ENCODE measurements at regions of chr6 and their contacts with region 1.

Region 1: GRCh38 chr6:42901536-42901957 is 14.3 kb upstream of the PTCRA start:
- DNase-seq: peak; percentile 85
- H3K4me3 ChIP-seq: no peak overlapping the region
- H3K27ac ChIP-seq: no peak overlapping the region
- H3K4me1 ChIP-seq: peaks cover 7% of the 10 kb centered on the region
- H3K27me3 ChIP-seq: no peaks in the 10 kb centered on the region
- CTCF ChIP-seq: peak; percentile 64 to 79
- POLR2A ChIP-seq: no peak

Region 2: DNA sequence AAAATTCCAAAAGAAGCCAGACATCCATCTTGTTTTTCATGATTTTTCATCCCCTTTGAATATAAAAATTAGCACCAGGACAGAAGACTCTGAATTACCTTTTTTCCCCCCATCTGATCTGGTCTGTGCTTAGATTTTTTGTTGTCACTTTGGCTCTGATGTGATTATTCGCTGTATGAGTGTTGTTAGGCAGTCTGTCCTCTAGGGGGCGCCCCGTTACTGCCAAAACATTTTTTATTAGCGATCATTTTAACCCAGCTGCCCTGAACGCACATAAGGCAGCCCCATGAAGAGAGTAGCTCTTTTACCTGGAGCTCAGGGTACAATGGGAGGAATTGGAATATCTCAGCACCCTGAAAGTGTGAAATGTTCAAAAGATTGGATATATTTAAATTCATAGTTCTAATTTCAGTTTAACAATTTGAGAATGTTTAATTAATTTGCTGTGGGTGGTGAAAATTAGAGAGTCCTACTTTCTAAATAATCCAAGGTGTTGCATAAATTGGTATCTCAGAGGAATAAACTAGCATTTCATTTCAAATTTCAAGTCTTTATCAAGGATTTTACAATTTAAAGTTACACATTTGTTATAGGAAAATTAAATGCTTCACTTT is 239.9 kb before region 1 on chr6:
- CTCF ChIA-PET with region 1: interaction called, 22 read pairs
- POLR2A ChIA-PET with region 1: no interaction called
- dilution Hi-C with region 1: no loop called
- intact Hi-C with region 1: loop called (anchors 1 kb)
- DNase-seq: peak; percentile 73
- H3K4me3 ChIP-seq: no peak overlapping the region
- H3K27ac ChIP-seq: no peak overlapping the region
- H3K4me1 ChIP-seq: no peaks in the 10 kb centered on the region
- H3K27me3 ChIP-seq: no peaks in the 10 kb centered on the region
- CTCF ChIP-seq: peak; percentile 71 to 75
- POLR2A ChIP-seq: no peak

Region 3: GRCh38 chr6:42879372-42880239 is 21.9 kb before region 1 on chr6 and contains the start of gene RPL7L1:
- CTCF ChIA-PET with region 1: interaction called, 3 read pairs
- POLR2A ChIA-PET with region 1: no interaction called
- dilution Hi-C with region 1: no loop called
- intact Hi-C with region 1: loop called (anchors 2 kb)
- DNase-seq: peak; percentile 90
- H3K4me3 ChIP-seq: peak within 1 kb of the TSS; percentile 77 to 91 (median 86)
- H3K27ac ChIP-seq: peak within 1 kb of the TSS; percentile 68
- H3K4me1 ChIP-seq: peaks cover 6% of the 10 kb centered on the region
- H3K27me3 ChIP-seq: no peaks in the 10 kb centered on the region
- CTCF ChIP-seq: no peak
- POLR2A ChIP-seq: peak; percentile 91
- total RNA-seq, gene RPL7L1: 94.4 and 103 TPM in 2 replicates

Region 4: DNA sequence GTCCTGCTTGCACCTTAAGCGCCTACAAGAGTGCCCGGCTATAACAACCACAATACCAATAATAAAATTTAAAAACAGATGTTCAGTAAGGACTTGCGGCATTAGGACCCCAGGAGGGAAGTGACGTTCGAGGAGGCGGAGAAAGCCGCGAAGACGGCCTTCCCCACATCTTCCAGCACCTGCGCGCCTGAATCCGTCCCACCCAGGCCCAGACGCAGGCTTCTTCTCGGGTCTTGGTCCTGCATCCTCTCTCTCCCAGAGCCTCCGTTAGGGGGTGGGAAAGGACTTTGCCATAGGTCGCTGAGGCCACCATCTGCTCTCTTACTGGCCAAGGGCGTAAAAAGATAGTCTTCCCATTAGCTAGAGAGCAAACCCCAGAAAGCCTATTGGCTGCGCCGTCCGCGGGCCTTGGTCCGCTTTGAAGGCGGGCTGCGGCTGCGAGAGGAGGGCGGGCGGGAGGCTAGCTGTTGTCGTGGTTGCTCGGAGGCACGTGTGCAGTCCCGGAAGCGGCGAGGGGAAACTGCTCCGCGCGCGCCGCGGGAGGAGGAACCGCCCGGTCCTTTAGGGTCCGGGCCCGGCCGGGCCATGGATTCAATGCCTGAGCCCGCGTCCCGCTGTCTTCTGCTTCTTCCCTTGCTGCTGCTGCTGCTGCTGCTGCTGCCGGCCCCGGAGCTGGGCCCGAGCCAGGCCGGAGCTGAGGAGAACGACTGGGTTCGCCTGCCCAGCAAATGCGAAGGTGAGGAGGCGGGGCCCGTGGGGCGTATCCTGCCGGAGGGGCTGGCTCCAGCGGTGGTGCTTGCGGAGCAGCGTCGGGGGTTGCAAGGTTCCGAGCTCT is 27.7 kb after region 1 on chr6 and contains the start of gene CNPY3:
- CTCF ChIA-PET with region 1: interaction called, 12 read pairs
- POLR2A ChIA-PET with region 1: no interaction called
- dilution Hi-C with region 1: no loop called
- intact Hi-C with region 1: no loop called
- DNase-seq: peak; percentile 98
- H3K4me3 ChIP-seq: peak within 1 kb of the TSS; percentile 54 to 94 (median 85)
- H3K27ac ChIP-seq: peak within 1 kb of the TSS; percentile 95
- H3K4me1 ChIP-seq: peaks cover 17% of the 10 kb centered on the region
- H3K27me3 ChIP-seq: peaks cover 0 to 3% of the 10 kb centered on the region in 2 experiments
- CTCF ChIP-seq: peak in 1 of 2 donors; percentile 7
- POLR2A ChIP-seq: no peak
- total RNA-seq, gene CNPY3: 43.3 and 53.1 TPM in 2 replicates

Region 5: DNA sequence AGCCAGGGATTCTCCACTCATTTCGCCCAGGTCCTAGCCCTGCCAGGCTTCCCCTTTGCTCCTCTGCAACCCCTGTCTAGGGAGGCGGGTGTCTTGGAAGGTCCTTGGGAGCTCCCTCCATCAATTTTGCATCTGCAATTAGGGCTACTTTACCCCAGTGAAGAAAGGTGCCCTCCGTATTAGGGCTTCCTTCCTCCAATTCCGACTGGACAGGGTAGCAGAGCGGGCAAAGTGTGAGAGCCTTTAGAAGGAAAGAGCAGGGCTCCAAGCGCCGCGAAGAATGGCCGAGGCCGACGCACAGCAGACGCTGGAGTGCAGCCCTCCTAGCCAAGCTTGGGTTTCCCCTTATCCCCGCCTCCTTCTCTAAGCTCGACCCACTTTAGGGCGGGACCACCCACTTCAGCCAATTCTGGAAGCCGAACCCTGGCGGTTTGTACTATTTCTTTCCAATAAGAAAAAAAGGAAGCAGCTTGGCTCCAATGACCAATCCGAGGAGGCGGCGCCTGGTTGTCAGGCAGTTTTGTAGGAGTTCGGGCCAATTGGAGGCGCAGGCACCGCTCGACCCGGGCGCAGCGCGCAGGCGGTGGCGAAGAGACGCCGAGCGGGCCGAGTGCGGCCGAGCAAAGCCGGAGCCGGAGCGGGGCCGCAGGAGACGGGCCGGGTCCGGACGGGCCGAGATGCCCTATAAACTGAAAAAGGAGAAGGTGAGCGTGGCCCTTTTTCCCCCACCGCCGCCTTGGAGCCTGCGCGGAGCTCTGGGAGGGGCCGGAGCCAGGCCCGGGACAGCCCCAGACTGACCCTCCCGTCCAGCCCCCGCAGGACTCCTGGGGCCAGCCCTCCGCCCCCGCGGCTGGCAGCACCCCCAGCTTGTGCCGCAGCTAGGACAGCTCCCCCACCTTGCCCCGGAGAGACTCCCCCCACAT is 82.7 kb after region 1 on chr6 and contains the start of gene PPP2R5D:
- CTCF ChIA-PET with region 1: no interaction called
- POLR2A ChIA-PET with region 1: no interaction called
- dilution Hi-C with region 1: no loop called
- intact Hi-C with region 1: loop called (anchors 5 kb)
- DNase-seq: peak; percentile 99
- H3K4me3 ChIP-seq: peak within 1 kb of the TSS; percentile 57 to 90 (median 83)
- H3K27ac ChIP-seq: no peak within 1 kb of the TSS
- H3K4me1 ChIP-seq: peaks cover 35% of the 10 kb centered on the region
- H3K27me3 ChIP-seq: no peaks in the 10 kb centered on the region
- CTCF ChIP-seq: no peak
- POLR2A ChIP-seq: peak; percentile 66
- total RNA-seq, gene PPP2R5D: 45.5 and 51.0 TPM in 2 replicates

Region 6: GRCh38 chr6:43129434-43130194 is 228.1 kb after region 1 on chr6:
- CTCF ChIA-PET with region 1: interaction called, 4 read pairs
- POLR2A ChIA-PET with region 1: no interaction called
- dilution Hi-C with region 1: no loop called
- intact Hi-C with region 1: loop called (anchors 5 kb)
- DNase-seq: peak; percentile 33
- H3K4me3 ChIP-seq: no peak overlapping the region
- H3K27ac ChIP-seq: no peak overlapping the region
- H3K4me1 ChIP-seq: no peaks in the 10 kb centered on the region
- H3K27me3 ChIP-seq: no peaks in the 10 kb centered on the region
- CTCF ChIP-seq: peak; percentile 46 to 56
- POLR2A ChIP-seq: no peak

Region 7: GRCh38 chr6:43506667-43507471 is 605.3 kb after region 1 on chr6:
- CTCF ChIA-PET with region 1: no interaction called
- POLR2A ChIA-PET with region 1: no interaction called
- dilution Hi-C with region 1: no loop called
- intact Hi-C with region 1: loop called (anchors 10 kb)
- DNase-seq: peak; percentile 82
- H3K4me3 ChIP-seq: no peak overlapping the region
- H3K27ac ChIP-seq: no peak overlapping the region
- H3K4me1 ChIP-seq: peaks cover 7% of the 10 kb centered on the region
- H3K27me3 ChIP-seq: no peaks in the 10 kb centered on the region
- CTCF ChIP-seq: peak; percentile 91 to 94
- POLR2A ChIP-seq: no peak

Measured in endothelial cell of umbilical vein (primary cell).